ENCODE measurements at regions of chr11 and their contacts with region 1.

Region 1: GRCh38 chr11:95705485-95706124 is 84.0 kb downstream of the FAM76B start:
- DNase-seq: peak; percentile 49
- H3K4me3 ChIP-seq: no peak overlapping the region
- CTCF ChIP-seq: peak; percentile 90

Region 2: DNA sequence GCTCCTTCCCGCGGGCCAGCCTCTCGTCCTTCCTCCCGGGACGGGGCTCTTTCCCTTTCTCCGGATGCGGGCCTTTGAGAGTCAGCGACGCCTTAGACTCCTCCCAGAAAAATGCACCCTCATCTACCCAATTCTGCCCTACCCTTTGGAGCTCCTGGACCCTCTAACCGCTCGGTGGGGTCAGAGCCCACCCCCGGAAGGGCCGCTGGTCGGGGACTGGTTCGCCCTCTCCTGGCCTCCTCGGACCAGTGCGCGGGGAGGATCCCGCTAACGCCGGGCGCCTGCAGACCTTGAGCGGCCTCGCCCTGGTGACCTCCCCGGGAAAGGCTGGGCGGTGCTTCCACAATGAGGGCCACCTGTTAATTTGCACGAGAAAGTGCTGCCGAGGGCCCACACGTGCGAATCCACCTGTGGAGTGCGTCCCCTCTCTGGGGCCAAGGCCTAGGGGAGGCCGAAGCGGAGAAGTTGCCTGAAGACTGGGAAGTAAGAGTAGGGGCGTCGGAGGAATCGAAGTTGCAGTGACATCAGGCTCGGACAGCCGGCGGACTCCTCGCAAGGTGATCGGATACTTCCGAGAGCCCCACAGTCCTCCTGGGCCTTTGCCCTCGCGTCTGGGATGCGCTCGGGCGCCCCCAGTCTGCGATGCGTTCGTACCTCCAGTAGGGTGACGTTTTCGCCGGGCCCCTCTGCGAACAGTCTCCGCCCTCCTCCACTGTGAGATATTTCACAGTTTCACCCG is 554.5 kb before region 1 on chr11:
- CTCF ChIA-PET with region 1: interaction called, 533 read pairs
- POLR2A ChIA-PET with region 1: interaction called, 5 read pairs
- DNase-seq: no peak
- H3K4me3 ChIP-seq: peak overlapping the region; percentile 58
- CTCF ChIP-seq: peak; percentile 85

Region 3: GRCh38 chr11:95299078-95299679 is 406.4 kb before region 1 on chr11:
- CTCF ChIA-PET with region 1: interaction called, 11 read pairs
- POLR2A ChIA-PET with region 1: no interaction called
- DNase-seq: no peak
- H3K4me3 ChIP-seq: no peak overlapping the region
- CTCF ChIP-seq: no peak

Region 4: DNA sequence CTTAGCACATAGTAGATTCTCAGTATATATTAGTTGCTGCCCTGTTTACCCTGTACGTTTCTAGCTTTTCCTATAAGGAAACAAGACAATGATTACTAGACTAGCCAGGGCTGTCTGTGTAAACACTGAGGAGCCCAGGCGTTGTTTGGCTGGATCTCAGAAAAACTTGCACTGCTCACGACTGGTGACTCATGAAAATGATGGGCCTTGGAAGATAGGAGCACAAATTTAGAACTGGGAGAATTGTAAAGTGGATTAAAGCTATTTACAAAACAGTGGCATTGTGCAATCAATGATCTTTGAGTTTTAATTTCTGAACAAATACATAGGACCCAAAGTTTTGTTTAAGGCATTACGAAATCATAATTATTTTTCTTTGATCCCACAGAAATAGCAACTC is 192.9 kb before region 1 on chr11:
- CTCF ChIA-PET with region 1: interaction called, 16 read pairs
- POLR2A ChIA-PET with region 1: no interaction called
- DNase-seq: peak; percentile 81
- H3K4me3 ChIP-seq: no peak overlapping the region
- CTCF ChIP-seq: no peak

Region 5: GRCh38 chr11:95715777-95716241 is 10.2 kb after region 1 on chr11:
- CTCF ChIA-PET with region 1: interaction called, 31 read pairs
- POLR2A ChIA-PET with region 1: no interaction called
- DNase-seq: no peak
- H3K4me3 ChIP-seq: no peak overlapping the region
- CTCF ChIP-seq: no peak

Region 6: DNA sequence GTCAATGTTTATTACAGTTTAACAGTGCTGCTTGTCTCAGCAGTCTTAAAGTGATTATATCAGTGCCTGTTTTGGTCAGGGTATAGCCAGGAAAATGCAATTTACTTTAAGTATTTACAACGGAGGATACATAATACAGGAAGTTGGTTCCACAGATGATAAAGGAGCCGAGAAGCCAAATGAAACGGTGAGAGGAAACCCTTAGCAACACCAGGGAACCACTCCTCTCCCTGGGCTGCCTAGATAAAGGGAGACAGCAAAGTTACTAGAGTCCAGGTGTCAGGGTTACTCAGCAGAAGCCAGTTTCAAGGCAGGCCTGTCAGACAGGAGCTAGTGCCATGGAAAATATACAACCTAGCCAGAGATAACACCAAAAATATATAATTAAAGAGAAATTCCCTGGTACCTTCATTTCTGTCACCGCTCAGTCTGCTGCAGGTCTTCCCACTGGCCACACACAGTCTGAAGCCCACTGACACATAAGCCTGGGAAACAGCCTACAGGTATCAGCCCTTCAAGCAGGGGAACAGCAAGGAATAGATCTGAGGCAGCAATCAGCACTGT is 28.5 kb after region 1 on chr11:
- CTCF ChIA-PET with region 1: interaction called, 21 read pairs
- POLR2A ChIA-PET with region 1: no interaction called
- DNase-seq: no peak
- H3K4me3 ChIP-seq: no peak overlapping the region
- CTCF ChIP-seq: no peak

Region 7: GRCh38 chr11:95764267-95764898 is 58.8 kb after region 1 on chr11:
- CTCF ChIA-PET with region 1: interaction called, 48 read pairs
- POLR2A ChIA-PET with region 1: no interaction called
- DNase-seq: no peak
- H3K4me3 ChIP-seq: no peak overlapping the region
- CTCF ChIP-seq: peak; percentile 31